ENCODE measurements at regions of chr17 and their contacts with region 1.

Region 1: GRCh38 chr17:42760652-42761581 is at the start of gene RAMP2:
- DNase-seq: peak in 1 of 2 experiments; percentile 79
- H3K4me3 ChIP-seq: peak within 1 kb of the TSS; percentile 42 to 86 (median 60)
- H3K27ac ChIP-seq: no peak within 1 kb of the TSS
- H3K4me1 ChIP-seq: peaks cover 5 to 17% (median 9%) of the 10 kb centered on the region in 4 experiments
- H3K27me3 ChIP-seq: peaks cover 12 to 28% (median 24%) of the 10 kb centered on the region in 4 experiments
- CTCF ChIP-seq: no peak
- EP300 ChIP-seq: no peak
- POLR2A ChIP-seq: no peak; a peak in 1 of 3 replicates
- RAD21 ChIP-seq: no peak
- total RNA-seq, gene RAMP2: 12.0 and 13.4 TPM in 2 replicates

Region 2: DNA sequence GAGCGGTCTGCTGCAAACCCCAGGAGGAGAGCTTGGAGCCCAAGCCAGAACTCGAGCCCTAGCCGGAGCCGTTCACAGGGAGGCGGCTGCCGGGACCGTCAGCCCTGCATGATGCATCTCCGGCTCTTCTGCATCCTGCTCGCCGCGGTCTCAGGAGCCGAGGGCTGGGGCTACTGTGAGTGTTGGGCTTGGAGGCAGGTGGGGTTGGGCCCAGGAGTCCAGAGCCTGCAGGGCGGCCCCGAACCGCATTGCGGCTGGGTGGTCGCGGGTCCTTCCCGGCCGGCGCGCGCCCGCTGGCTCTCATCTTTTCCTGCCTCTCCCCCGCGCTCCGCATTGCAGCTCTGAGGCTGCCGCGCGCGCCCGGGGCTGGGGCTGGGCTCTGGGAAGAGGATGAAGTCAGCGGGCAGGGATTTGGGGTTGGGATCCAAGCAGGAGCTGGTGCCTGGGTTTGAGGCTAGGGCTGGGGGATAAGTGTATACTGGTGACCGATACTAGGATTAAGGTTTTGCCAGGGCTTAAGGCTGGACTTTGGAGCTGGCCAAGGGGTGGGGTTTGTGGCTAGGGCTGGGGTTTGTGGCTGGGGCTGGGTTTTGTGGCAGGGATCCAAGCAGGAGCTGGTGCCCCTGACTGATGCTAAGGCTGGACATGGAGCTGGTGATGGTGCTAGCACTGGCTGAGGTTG is 78.1 kb before region 1 on chr17:
- CTCF ChIA-PET with region 1: interaction called, 13 read pairs
- POLR2A ChIA-PET with region 1: interaction called, 9 read pairs
- DNase-seq: peak in 1 of 2 experiments; percentile 77
- H3K4me3 ChIP-seq: peak overlapping the region; percentile 55 to 71 (median 59)
- H3K27ac ChIP-seq: no peak overlapping the region
- H3K4me1 ChIP-seq: peaks cover 0 to 24% (median 24%) of the 10 kb centered on the region in 4 experiments; a peak in 6 of 7 replicates
- H3K27me3 ChIP-seq: peaks cover 0 to 29% (median 22%) of the 10 kb centered on the region in 4 experiments; a peak in 5 of 7 replicates
- CTCF ChIP-seq: no peak
- EP300 ChIP-seq: no peak
- POLR2A ChIP-seq: no peak
- RAD21 ChIP-seq: no peak

Region 3: GRCh38 chr17:42720996-42721583 is 39.8 kb before region 1 on chr17:
- CTCF ChIA-PET with region 1: interaction called, 26 read pairs
- POLR2A ChIA-PET with region 1: no interaction called
- DNase-seq: no peak
- H3K4me3 ChIP-seq: no peak overlapping the region
- H3K27ac ChIP-seq: no peak overlapping the region
- H3K4me1 ChIP-seq: no peaks in the 10 kb centered on the region
- H3K27me3 ChIP-seq: no peaks in the 10 kb centered on the region
- CTCF ChIP-seq: peak in 2 of 3 experiments; percentile 60 to 61; a peak in 3 of 4 replicates
- EP300 ChIP-seq: no peak
- POLR2A ChIP-seq: no peak
- RAD21 ChIP-seq: peak; percentile 71 to 77

Region 4: GRCh38 chr17:42773290-42774035 is 12.5 kb after region 1 on chr17 and contains the start of gene VPS25:
- CTCF ChIA-PET with region 1: interaction called, 30 read pairs
- POLR2A ChIA-PET with region 1: interaction called, 15 read pairs
- DNase-seq: peak in 1 of 2 experiments; percentile 83
- H3K4me3 ChIP-seq: peak within 1 kb of the TSS; percentile 80 to 94 (median 84)
- H3K27ac ChIP-seq: peak within 1 kb of the TSS; percentile 79; the same call in 1 of the 2 replicates
- H3K4me1 ChIP-seq: no peaks in the 10 kb centered on the region
- H3K27me3 ChIP-seq: no peaks in the 10 kb centered on the region
- CTCF ChIP-seq: peak in 2 of 3 experiments; percentile 10 to 14; a peak in 1 of 4 replicates
- EP300 ChIP-seq: peak in 1 of 2 experiments; percentile 69; a peak in 1 of 3 replicates
- POLR2A ChIP-seq: peak; percentile 72 to 97
- RAD21 ChIP-seq: peak in 1 of 2 experiments; percentile 21; a peak in 1 of 4 replicates
- total RNA-seq, gene VPS25: 83.9 and 88.2 TPM in 2 replicates

Region 5: GRCh38 chr17:42918902-42919521 is 158.1 kb after region 1 on chr17:
- CTCF ChIA-PET with region 1: no interaction called
- POLR2A ChIA-PET with region 1: no interaction called
- DNase-seq: no peak
- H3K4me3 ChIP-seq: no peak overlapping the region
- H3K27ac ChIP-seq: no peak overlapping the region
- H3K4me1 ChIP-seq: peaks cover 0 to 9% (median 0%) of the 10 kb centered on the region in 4 experiments; a peak in 2 of 7 replicates
- H3K27me3 ChIP-seq: no peaks in the 10 kb centered on the region
- CTCF ChIP-seq: no peak
- EP300 ChIP-seq: no peak
- POLR2A ChIP-seq: no peak
- RAD21 ChIP-seq: no peak